Sigmoid colon (tissue), 7 donors: ENCODE measurements at regions of chr11 and their contacts with region 1.

Region 1: GRCh38 chr11:45371251-45372115 is 85.3 kb upstream of the SYT13 start:
- DNase-seq: no peak
- H3K4me3 ChIP-seq: no peak overlapping the region
- H3K27ac ChIP-seq: no peak overlapping the region
- H3K4me1 ChIP-seq: peaks cover 0 to 5% (median 2%) of the 10 kb centered on the region in 4 donors
- H3K27me3 ChIP-seq: peaks cover 0 to 24% (median 8%) of the 10 kb centered on the region in 3 donors
- CTCF ChIP-seq: peak in 3 of 4 experiments; percentile 57 to 78 (median 72)
- EP300 ChIP-seq: no peak
- POLR2A ChIP-seq: no peak

Region 2: GRCh38 chr11:45655347-45655756 is 283.9 kb after region 1 on chr11:
- intact Hi-C with region 1: loop called (anchors 5 kb)
- DNase-seq: peak; percentile 84
- H3K4me3 ChIP-seq: no peak overlapping the region
- H3K27ac ChIP-seq: no peak overlapping the region
- H3K4me1 ChIP-seq: peaks cover 0 to 36% (median 6%) of the 10 kb centered on the region in 4 donors
- H3K27me3 ChIP-seq: peaks cover 16 to 48% (median 37%) of the 10 kb centered on the region in 3 donors
- CTCF ChIP-seq: peak; percentile 49 to 90 (median 77)
- EP300 ChIP-seq: no peak
- POLR2A ChIP-seq: no peak